Activated naive CD4-positive, alpha-beta T cell treated with anti-CD3 and anti-CD28 coated beads for 36 hours (primary cell): ENCODE measurements at regions of chr12 and their contacts with region 1.

Region 1: DNA sequence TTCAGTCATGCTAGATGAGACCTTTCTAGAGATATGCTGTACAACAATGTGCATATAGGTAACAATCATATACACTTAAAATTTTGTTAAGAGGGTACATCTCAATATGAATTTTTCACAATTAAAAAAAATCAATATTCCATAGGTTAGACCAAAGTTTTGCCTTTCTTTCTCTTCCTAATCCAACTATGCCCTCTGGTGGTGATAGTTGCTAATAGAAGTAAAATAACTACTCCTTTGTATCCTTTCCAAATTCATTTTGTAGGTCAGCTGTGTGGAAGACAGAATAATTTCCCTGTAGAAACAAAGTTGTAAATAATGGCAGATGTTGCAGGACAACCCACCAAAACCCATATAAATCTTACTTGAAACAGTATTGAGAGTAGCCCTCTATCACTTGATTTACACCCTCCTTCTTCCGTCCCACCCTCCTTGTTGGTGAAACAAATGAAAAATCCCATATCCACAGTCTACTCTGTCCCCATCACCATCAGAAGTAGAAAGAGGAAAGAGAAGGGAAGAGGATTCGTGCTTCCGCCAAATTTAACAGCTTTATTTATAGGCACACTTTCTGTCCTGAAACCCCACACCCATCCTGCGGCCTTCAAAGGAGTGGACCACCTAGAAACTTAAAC is 34.2 kb upstream of the KICS2 start:
- DNase-seq: no peak
- H3K4me3 Mint-ChIP-seq: no peak overlapping the region
- H3K27ac Mint-ChIP-seq: no peak overlapping the region
- H3K4me1 Mint-ChIP-seq: no peaks in the 10 kb centered on the region
- H3K27me3 Mint-ChIP-seq: no peaks in the 10 kb centered on the region

Region 2: DNA sequence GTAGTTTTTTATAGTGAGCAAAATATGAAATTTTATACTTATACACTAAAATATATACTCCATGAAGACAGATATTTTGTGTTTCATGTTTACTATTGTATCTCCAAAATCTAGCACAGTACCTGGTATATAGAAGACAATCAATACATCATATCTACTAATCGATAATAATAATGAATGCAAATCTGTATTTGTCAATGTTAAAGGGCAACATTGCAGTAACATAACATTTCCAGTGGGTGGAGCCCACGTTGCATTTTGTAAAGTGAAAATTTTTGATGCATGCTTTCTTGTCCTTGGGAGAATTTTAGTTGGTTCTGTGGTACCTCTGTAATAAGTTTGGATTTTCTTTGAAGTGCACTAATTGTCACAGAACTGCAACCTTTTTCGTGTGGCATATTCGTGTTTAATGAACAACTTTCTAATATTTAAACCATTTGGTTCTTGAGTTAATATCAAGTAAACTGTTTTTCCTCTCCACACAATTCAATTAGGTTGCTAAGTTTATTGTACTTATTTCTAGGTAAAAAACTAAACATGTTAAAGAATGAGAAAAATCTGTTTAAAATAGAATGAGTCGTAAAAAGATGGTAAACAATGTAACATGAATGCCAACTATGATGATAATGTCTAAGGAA is 1152.7 kb before region 1 on chr12:
- CTCF ChIA-PET with region 1: no interaction called
- intact Hi-C with region 1: loop called (anchors 5 kb)
- DNase-seq: peak; percentile 11
- H3K4me3 Mint-ChIP-seq: no peak overlapping the region
- H3K27ac Mint-ChIP-seq: no peak overlapping the region
- H3K4me1 Mint-ChIP-seq: no peaks in the 10 kb centered on the region
- H3K27me3 Mint-ChIP-seq: peaks cover 6% of the 10 kb centered on the region

Region 3: DNA sequence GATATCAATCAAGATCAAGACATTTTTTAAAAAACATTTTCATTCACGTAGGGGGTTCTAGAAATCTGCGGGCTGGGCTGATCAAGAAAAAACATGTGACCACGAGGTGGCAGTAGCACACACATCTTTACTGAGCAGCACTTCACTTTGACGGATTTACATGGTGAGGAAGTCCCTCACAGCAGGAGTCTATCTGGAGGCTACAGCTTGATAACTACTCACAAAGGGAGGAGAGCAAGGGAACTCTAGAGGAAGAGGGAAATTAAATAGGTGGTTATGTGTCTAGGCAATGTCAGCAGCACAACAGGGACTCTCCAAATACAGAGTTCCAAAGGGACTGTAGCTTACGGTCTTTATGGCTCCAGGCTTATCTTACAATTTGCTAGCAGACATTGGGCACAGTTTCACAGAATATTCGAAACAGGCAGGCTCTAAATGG is 836.1 kb before region 1 on chr12:
- CTCF ChIA-PET with region 1: interaction called, 3 read pairs
- intact Hi-C with region 1: loop called (anchors 2 kb)
- DNase-seq: peak; percentile 45
- H3K4me3 Mint-ChIP-seq: no peak overlapping the region
- H3K27ac Mint-ChIP-seq: no peak overlapping the region
- H3K4me1 Mint-ChIP-seq: no peaks in the 10 kb centered on the region
- H3K27me3 Mint-ChIP-seq: no peaks in the 10 kb centered on the region

Region 4: GRCh38 chr12:63668028-63668799 is 588.1 kb before region 1 on chr12 and contains the start of gene DPY19L2:
- CTCF ChIA-PET with region 1: no interaction called
- intact Hi-C with region 1: loop called (anchors 2 kb)
- DNase-seq: peak; percentile 69
- H3K4me3 Mint-ChIP-seq: peak within 1 kb of the TSS; percentile 79
- H3K27ac Mint-ChIP-seq: peak within 1 kb of the TSS; percentile 36
- H3K4me1 Mint-ChIP-seq: peaks cover 10% of the 10 kb centered on the region
- H3K27me3 Mint-ChIP-seq: peaks cover 29% of the 10 kb centered on the region
- total RNA-seq, gene DPY19L2: 0.91 to 1.1 TPM

Region 5: GRCh38 chr12:63826006-63826585 is 430.2 kb before region 1 on chr12:
- CTCF ChIA-PET with region 1: interaction called, 4 read pairs
- intact Hi-C with region 1: loop called (anchors 1 kb)
- DNase-seq: no peak
- H3K4me3 Mint-ChIP-seq: no peak overlapping the region
- H3K27ac Mint-ChIP-seq: no peak overlapping the region
- H3K4me1 Mint-ChIP-seq: peaks cover 6% of the 10 kb centered on the region
- H3K27me3 Mint-ChIP-seq: peaks cover 18% of the 10 kb centered on the region

Region 6: GRCh38 chr12:64099397-64099796 is 156.9 kb before region 1 on chr12:
- CTCF ChIA-PET with region 1: no interaction called
- intact Hi-C with region 1: loop called (anchors 10 kb)
- DNase-seq: no peak
- H3K4me3 Mint-ChIP-seq: no peak overlapping the region
- H3K27ac Mint-ChIP-seq: no peak overlapping the region
- H3K4me1 Mint-ChIP-seq: no peaks in the 10 kb centered on the region
- H3K27me3 Mint-ChIP-seq: peaks cover 6% of the 10 kb centered on the region